Upper lobe of right lung (tissue), 1 donor: ENCODE measurements at regions of chr6 and their contacts with region 1.

Region 1: DNA sequence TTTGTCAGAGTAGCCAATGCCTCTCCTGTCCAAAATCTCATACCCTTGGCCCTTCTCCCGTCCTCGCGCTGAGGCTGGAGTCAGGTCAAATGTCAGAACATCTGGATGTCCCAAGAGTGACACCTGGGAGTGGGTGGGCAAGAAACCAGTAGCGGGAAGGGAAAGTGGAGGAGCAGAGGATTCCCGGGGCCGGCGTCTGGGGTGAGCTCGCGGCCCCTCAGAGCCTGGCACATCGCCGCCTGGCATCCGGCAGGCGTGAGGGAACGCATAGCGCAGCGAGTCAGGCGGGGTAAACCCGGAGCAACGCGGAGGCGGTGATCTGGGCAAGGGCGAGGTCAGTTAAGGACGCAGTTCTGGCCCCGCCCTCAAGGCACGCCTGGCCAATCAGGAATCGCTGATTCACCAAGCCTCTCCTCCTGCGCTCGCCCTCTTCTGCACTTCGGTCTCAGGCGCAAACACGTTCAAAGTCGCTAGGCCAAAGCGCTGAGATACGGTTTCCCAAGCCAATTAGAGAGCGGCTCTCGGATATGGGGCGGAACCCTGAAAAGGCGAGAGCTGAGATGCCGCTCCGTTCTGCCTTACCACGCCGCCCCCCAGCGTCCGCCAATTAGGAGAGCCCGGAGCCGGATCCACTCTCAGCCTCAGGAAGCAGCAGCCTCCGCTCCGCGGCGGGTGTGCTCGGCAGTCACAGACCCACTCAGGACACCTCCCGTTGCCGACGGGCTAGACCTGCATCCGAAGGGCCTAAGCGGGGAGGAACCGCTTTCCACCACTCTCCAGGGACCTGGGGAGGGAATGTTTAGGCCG is 22.5 kb downstream of the VPS52 start:
- DNase-seq: peak; percentile 98
- ATAC-seq: peak; percentile 96
- H3K4me3 ChIP-seq: peak overlapping the region; percentile 59
- H3K27ac ChIP-seq: peak overlapping the region; percentile 95
- H3K4me1 ChIP-seq: peaks cover 21% of the 10 kb centered on the region
- H3K27me3 ChIP-seq: no peaks in the 10 kb centered on the region
- CTCF ChIP-seq: peak; percentile 39

Region 2: GRCh38 chr6:33014841-33015634 is 234.1 kb before region 1 on chr6:
- intact Hi-C with region 1: loop called (anchors 10 kb)
- DNase-seq: no peak
- ATAC-seq: peak; percentile 66
- H3K4me3 ChIP-seq: no peak overlapping the region
- H3K27ac ChIP-seq: no peak overlapping the region
- H3K4me1 ChIP-seq: peaks cover 21% of the 10 kb centered on the region
- H3K27me3 ChIP-seq: no peaks in the 10 kb centered on the region
- CTCF ChIP-seq: peak; percentile 85

Region 3: GRCh38 chr6:33126101-33126714 is 122.9 kb before region 1 on chr6:
- intact Hi-C with region 1: loop called (anchors 10 kb)
- DNase-seq: peak; percentile 88
- ATAC-seq: peak; percentile 85
- H3K4me3 ChIP-seq: no peak overlapping the region
- H3K27ac ChIP-seq: no peak overlapping the region
- H3K4me1 ChIP-seq: no peaks in the 10 kb centered on the region
- H3K27me3 ChIP-seq: peaks cover 6% of the 10 kb centered on the region
- CTCF ChIP-seq: peak; percentile 84

Region 4: GRCh38 chr6:33161354-33162331 is 87.5 kb before region 1 on chr6:
- intact Hi-C with region 1: loop called (anchors 10 kb)
- DNase-seq: peak; percentile 93
- ATAC-seq: peak; percentile 95
- H3K4me3 ChIP-seq: peak overlapping the region; percentile 56
- H3K27ac ChIP-seq: no peak overlapping the region
- H3K4me1 ChIP-seq: peaks cover 13% of the 10 kb centered on the region
- H3K27me3 ChIP-seq: no peaks in the 10 kb centered on the region
- CTCF ChIP-seq: peak; percentile 93